ENCODE measurements at regions of chr1 and their contacts with region 1.

Region 1: DNA sequence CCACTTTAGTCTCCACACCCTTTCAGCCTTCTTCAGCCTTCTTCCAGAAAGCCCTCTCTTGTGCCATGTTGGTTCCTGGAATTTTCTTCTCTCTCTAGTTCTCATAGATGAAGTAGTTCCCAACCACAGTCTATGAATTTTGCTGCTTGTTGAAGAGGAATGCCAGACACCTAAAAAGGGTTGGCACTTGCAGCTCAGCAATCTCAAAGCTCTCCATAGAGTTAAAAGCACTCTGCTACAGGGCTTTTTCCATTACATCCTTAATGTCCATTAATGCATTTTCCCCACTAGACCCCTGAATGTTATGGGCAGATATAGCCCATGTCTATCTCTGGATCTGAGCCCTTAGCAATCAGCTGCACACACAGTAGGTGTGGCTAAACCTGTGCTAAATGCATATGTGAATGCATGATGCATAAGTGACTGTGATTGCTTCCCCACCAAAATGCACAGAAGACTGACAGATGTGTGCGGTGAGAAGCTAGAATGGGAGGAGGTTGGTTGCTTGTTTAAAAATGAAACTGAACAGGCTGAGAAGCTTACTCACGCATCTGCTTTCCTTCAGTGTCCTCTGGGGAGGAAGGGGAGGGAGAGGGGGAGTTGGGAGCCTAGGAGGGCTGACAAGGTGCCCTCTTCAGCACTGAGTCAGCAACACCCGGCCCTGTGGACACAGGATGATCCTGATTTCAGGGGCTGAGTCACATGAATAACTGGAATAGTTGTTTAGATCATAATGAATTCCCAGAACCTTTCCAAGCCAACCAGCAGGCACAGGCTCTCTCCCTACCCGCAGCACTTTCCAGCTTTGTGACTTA is 146.1 kb upstream of the FGGY start:
- DNase-seq: peak; percentile 81
- ATAC-seq: peak; percentile 95

Region 2: DNA sequence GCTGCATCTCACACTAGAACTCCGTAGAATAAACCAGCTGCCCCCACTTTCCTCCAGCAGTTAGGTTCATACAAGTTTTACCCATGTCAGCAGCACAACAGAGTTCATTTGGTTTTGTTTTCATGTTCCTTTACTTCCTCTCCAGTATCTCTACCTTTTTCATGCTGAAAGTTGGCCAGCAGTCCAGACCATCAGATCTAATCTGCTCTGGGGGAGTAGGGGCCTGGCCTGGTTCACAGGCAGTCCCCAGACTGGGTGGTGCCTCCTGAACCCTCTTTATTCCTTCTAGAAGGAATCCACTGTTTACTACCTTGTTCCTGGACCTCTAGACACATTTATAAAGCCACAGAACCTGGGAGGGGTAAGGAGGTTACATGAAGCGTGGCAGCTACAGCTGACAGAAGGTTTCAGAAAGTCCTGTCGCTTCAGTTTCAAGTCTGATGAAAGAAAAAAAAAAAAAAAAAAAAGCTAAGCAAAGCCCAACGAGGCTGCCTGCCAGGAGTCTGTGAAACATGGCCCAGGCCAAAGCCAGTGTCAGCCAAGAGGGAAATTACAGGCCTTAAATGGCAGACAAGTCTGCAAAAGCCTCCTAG is 182.3 kb before region 1 on chr1:
- intact Hi-C with region 1: no loop called
- DNase-seq: peak; percentile 88
- ATAC-seq: peak; percentile 73

Region 3: GRCh38 chr1:59107516-59107915 is 43.3 kb before region 1 on chr1:
- intact Hi-C with region 1: loop called (anchors 5 kb)
- DNase-seq: peak; percentile 73
- ATAC-seq: peak; percentile 94

Region 4: DNA sequence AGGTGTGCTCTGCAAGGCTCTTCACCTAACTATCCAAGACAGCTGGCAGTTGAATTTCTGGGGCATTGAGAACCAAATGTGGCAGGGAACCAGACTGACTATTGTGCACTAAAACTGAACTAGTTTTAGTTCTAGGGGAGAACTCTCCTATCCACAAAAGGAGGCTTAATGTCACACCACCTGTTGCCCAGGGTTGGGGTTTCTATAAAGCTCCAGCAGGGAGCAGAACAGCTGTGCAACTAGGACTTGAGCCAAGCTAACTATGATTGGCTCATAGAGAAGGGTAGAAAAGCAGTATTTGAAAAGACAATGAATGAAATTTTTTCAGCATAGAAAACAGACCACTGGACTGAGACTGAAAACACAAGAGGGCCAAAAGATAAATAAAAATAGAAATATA is 92.8 kb after region 1 on chr1:
- intact Hi-C with region 1: no loop called
- DNase-seq: no peak
- ATAC-seq: no peak

Region 5: DNA sequence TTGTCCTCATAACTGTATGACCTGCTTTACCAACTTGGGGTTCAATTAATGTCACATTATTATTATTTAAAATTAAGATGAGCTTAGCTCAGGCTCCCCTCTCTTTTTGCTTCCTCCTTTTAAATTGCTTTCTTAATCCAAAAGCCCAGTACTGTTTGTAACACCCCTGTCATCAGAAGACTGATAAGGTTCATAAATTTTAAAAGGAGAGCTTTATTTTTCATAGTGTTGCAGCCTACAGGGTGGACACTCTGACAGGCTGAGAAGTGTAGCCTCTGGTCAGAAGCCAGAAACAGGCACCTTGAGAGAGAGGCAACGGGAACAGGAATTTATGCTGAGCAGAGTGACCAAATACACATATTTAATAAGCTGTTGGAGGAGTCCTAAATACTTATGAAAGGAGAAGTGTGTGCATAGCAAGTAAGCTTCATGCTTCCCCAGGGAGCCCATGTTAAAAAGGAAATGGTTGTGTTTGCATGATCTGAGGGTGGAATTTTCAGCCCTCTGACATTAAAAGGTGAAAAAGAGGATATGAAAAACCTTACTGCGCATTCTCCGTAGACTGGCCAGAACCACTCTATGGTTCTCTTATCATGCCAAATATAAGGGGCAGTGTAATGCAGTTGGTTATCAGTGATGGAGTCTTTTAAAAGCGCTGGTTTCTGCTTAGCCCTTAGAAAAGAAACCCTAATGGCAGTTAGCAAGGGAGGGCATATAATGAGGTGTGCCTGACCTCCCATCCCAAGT is 115.6 kb after region 1 on chr1:
- intact Hi-C with region 1: loop called (anchors 10 kb)
- DNase-seq: no peak
- ATAC-seq: peak; percentile 59

Region 6: DNA sequence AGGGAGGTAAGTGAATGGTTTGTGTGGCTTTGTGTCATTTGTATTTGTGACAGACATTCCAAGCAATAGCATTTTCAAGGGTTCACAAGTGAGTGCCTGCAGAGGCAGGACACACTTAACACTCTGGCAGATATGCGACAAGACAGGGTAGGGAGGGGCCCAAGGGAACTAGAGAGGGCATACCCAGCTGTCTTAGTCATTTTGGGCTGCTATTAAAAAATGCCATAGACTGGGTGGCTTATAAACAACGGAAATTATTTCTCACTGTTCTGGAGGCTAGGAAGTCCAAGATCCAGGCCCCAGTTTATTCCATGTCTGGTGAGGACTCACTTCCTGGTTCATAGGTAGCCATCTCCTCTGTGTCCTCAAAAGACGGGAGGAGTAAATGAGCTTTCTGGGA is 283.6 kb after region 1 on chr1:
- intact Hi-C with region 1: no loop called
- DNase-seq: no peak
- ATAC-seq: no peak

Region 7: GRCh38 chr1:59699227-59699847 is 548.6 kb after region 1 on chr1:
- intact Hi-C with region 1: loop called (anchors 5 kb)
- DNase-seq: no peak
- ATAC-seq: no peak